Mammary epithelial cell (primary cell): ENCODE measurements at regions of chr10 and their contacts with region 1.

Region 1: DNA sequence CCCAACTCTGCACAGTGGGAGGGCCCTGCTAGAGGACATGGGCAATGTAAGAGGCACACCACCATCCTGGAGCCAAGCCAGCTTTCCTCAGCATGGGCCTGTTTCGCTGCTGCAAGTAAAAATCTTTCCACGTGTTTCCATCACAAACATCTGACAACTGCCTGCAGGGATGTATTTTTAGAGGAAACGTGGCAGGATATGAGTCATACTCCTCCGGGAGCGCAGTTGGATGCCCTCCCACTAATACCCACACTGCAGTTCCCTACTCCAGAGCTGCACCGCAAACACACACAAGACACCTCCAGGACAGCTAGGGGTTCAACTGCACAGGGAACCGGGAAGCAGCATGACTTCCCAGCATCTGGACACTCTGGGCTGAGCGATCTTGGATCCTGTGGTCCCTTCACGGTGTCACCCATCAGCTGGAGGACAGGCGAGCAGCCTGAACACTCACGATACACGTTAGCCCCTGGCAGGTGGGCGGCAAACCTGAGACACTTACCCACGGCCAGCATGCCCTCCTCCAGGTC is 26.1 kb downstream of the PLAC9 start:
- DNase-seq: peak; percentile 92
- H3K4me3 ChIP-seq: no peak overlapping the region
- H3K27ac ChIP-seq: no peak overlapping the region
- H3K4me1 ChIP-seq: peaks cover 55% of the 10 kb centered on the region
- H3K27me3 ChIP-seq: no peaks in the 10 kb centered on the region
- CTCF ChIP-seq: no peak

Region 2: GRCh38 chr10:80196270-80196949 is 37.7 kb after region 1 on chr10:
- CTCF ChIA-PET with region 1: no interaction called
- dilution Hi-C with region 1: no loop called
- in situ Hi-C with region 1: loop called in 1 of 2 experiments (anchors 5 kb)
- intact Hi-C with region 1: loop called (anchors 2 kb)
- DNase-seq: peak; percentile 96
- H3K4me3 ChIP-seq: no peak overlapping the region
- H3K27ac ChIP-seq: peak overlapping the region; percentile 67
- H3K4me1 ChIP-seq: peaks cover 17% of the 10 kb centered on the region
- H3K27me3 ChIP-seq: no peaks in the 10 kb centered on the region
- CTCF ChIP-seq: no peak

Region 3: DNA sequence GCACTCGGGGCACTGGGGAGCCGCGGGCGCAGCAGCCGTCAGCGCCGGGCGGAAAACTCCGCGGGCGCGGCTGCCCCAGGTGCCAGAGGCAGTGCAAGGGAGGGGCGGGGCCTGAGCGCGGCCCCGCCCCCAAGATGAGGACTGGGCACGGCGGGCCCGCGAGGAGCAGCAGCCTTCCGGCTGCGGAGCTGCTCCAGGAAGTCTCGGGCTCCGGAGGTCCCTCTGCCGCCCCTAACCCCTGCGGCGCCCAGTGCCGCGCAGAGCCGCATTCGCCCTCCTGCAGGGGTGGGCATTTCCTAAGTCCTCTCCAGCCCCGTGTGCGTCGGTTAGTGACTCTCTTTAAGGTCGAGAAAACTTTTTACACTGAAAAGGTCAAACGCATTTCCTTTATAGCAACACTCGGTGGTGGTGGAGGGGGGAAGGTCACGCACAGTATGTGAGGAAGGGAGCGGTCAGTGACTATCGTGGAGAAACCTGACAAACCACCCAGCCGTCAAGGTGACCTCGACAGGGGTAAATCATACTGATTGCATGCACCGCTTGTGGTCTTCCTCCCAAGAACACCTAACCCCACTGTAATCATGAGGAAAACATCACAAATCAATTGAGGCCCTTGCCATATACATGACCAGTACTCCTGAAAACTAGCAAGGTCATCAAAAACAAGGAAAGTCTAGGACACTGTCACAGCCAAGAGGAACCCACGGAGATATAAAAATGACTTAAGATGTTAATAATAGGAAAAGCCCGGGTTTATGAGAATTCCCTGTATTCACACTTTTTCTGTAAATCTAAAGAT is 47.0 kb after region 1 on chr10 and contains the start of gene ANXA11:
- CTCF ChIA-PET with region 1: interaction called, 4 read pairs
- dilution Hi-C with region 1: no loop called
- in situ Hi-C with region 1: loop called in 1 of 2 experiments (anchors 5 kb)
- intact Hi-C with region 1: loop called (anchors 1 kb)
- DNase-seq: peak; percentile 79
- H3K4me3 ChIP-seq: peak within 1 kb of the TSS; percentile 58 to 69 (median 68)
- H3K27ac ChIP-seq: peak within 1 kb of the TSS; percentile 91
- H3K4me1 ChIP-seq: peaks cover 40% of the 10 kb centered on the region
- H3K27me3 ChIP-seq: no peaks in the 10 kb centered on the region
- CTCF ChIP-seq: no peak
- total RNA-seq, gene ANXA11: 36.8 to 117 TPM